CD8-positive, alpha-beta T cell (primary cell): ENCODE measurements at regions of chr20 and their contacts with region 1.

Region 1: GRCh38 chr20:44069203-44070011 is 117.6 kb downstream of the JPH2 start:
- DNase-seq: peak; percentile 49 to 94 (median 76)
- ATAC-seq: peak; percentile 49
- H3K4me3 ChIP-seq: peak overlapping the region; percentile 50 to 54
- H3K4me3 Mint-ChIP-seq: peak overlapping the region; percentile 78
- H3K27ac ChIP-seq: peak overlapping the region; percentile 80 to 99
- H3K27ac Mint-ChIP-seq: peak overlapping the region; percentile 98
- H3K4me1 ChIP-seq: peaks cover 64% of the 10 kb centered on the region
- H3K4me1 Mint-ChIP-seq: peaks cover 78% of the 10 kb centered on the region
- H3K27me3 ChIP-seq: peaks cover 0 to 7% of the 10 kb centered on the region in 2 experiments
- H3K27me3 Mint-ChIP-seq: no peaks in the 10 kb centered on the region
- CTCF ChIP-seq: no peak

Region 2: DNA sequence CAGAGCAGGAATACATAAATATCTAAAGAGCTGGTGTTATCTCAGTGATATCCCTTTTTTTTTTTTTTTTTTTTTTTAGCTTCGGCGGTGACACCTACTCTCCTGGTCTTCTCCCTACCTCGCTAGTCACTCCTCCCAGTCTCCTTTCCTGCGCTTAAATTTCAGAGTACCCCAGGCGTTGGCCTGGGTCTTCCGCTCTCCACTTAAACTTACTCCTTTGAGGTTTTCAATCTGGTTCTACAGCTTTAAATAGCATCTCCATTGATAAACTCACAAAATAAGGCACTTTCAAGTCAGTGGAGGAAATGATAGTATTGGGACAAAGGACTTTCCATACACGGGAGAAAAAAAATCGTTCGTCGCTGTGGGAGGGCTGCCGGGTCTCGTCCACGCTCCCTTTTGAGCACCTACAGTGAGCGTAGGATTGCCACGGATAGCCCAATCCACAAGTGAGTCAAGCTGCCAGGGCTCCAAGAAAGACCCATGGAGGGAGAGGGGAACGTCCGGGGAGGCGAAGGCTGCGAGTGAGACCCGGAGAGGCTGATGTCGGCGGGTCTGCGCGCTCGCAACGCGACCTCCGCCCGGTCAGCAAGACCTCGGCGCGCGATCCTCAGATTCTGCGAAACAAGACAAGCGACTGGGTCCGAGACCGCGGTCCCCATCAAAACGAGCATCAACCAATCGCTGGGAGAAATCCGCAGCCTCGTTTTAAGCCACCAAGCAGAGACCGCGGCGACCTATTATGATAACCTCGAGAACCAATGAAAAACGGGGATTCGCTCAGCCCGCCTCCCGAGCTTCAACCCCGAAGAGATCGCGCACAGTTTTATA is 612.4 kb before region 1 on chr20:
- CTCF ChIA-PET with region 1: no interaction called
- POLR2A ChIA-PET with region 1: no interaction called
- intact Hi-C with region 1: loop called in 1 of 2 experiments (anchors 5 kb)
- DNase-seq: peak; percentile 68 to 94 (median 87)
- ATAC-seq: peak; percentile 79
- H3K4me3 ChIP-seq: peak overlapping the region; percentile 97 to 100
- H3K4me3 Mint-ChIP-seq: peak overlapping the region; percentile 92
- H3K27ac ChIP-seq: peak overlapping the region; percentile 98 to 100
- H3K27ac Mint-ChIP-seq: peak overlapping the region; percentile 98
- H3K4me1 ChIP-seq: peaks cover 16% of the 10 kb centered on the region
- H3K4me1 Mint-ChIP-seq: peaks cover 36% of the 10 kb centered on the region
- H3K27me3 ChIP-seq: no peaks in the 10 kb centered on the region
- H3K27me3 Mint-ChIP-seq: peaks cover 8% of the 10 kb centered on the region
- CTCF ChIP-seq: no peak

Region 3: GRCh38 chr20:43666376-43667328 is 402.8 kb before region 1 on chr20 and contains the start of gene MYBL2:
- CTCF ChIA-PET with region 1: no interaction called
- POLR2A ChIA-PET with region 1: no interaction called
- intact Hi-C with region 1: loop called in 1 of 2 experiments (anchors 10 kb)
- DNase-seq: peak; percentile 49 to 82 (median 66)
- ATAC-seq: peak; percentile 97
- H3K4me3 ChIP-seq: peak within 1 kb of the TSS; percentile 32 to 58
- H3K4me3 Mint-ChIP-seq: peak within 1 kb of the TSS; percentile 54
- H3K27ac ChIP-seq: no peak within 1 kb of the TSS
- H3K27ac Mint-ChIP-seq: no peak within 1 kb of the TSS
- H3K4me1 ChIP-seq: peaks cover 8% of the 10 kb centered on the region
- H3K4me1 Mint-ChIP-seq: peaks cover 2% of the 10 kb centered on the region
- H3K27me3 ChIP-seq: peaks cover 10 to 16% of the 10 kb centered on the region in 2 experiments
- H3K27me3 Mint-ChIP-seq: peaks cover 22% of the 10 kb centered on the region
- CTCF ChIP-seq: no peak
- total RNA-seq, gene MYBL2: 0.49 to 1.1 TPM

Region 4: GRCh38 chr20:43863821-43864544 is 205.4 kb before region 1 on chr20:
- CTCF ChIA-PET with region 1: no interaction called
- POLR2A ChIA-PET with region 1: no interaction called
- intact Hi-C with region 1: no loop called
- DNase-seq: no peak
- ATAC-seq: no peak
- H3K4me3 ChIP-seq: no peak overlapping the region
- H3K4me3 Mint-ChIP-seq: no peak overlapping the region
- H3K27ac ChIP-seq: no peak overlapping the region
- H3K27ac Mint-ChIP-seq: no peak overlapping the region
- H3K4me1 ChIP-seq: no peaks in the 10 kb centered on the region
- H3K4me1 Mint-ChIP-seq: no peaks in the 10 kb centered on the region
- H3K27me3 ChIP-seq: peaks cover 0 to 5% of the 10 kb centered on the region in 2 experiments
- H3K27me3 Mint-ChIP-seq: no peaks in the 10 kb centered on the region
- CTCF ChIP-seq: no peak

Region 5: GRCh38 chr20:43955062-43955749 is 114.2 kb before region 1 on chr20:
- CTCF ChIA-PET with region 1: no interaction called
- POLR2A ChIA-PET with region 1: interaction called, 3 read pairs
- intact Hi-C with region 1: loop called (anchors 1 to 5 kb)
- DNase-seq: peak in 6 of 9 experiments; percentile 17 to 71 (median 62)
- ATAC-seq: peak; percentile 68
- H3K4me3 ChIP-seq: no peak overlapping the region
- H3K4me3 Mint-ChIP-seq: peak overlapping the region; percentile 54
- H3K27ac ChIP-seq: no peak overlapping the region
- H3K27ac Mint-ChIP-seq: peak overlapping the region; percentile 32
- H3K4me1 ChIP-seq: peaks cover 72% of the 10 kb centered on the region
- H3K4me1 Mint-ChIP-seq: peaks cover 86% of the 10 kb centered on the region
- H3K27me3 ChIP-seq: peaks cover 5 to 10% of the 10 kb centered on the region in 2 experiments
- H3K27me3 Mint-ChIP-seq: peaks cover 11% of the 10 kb centered on the region
- CTCF ChIP-seq: no peak

Region 6: DNA sequence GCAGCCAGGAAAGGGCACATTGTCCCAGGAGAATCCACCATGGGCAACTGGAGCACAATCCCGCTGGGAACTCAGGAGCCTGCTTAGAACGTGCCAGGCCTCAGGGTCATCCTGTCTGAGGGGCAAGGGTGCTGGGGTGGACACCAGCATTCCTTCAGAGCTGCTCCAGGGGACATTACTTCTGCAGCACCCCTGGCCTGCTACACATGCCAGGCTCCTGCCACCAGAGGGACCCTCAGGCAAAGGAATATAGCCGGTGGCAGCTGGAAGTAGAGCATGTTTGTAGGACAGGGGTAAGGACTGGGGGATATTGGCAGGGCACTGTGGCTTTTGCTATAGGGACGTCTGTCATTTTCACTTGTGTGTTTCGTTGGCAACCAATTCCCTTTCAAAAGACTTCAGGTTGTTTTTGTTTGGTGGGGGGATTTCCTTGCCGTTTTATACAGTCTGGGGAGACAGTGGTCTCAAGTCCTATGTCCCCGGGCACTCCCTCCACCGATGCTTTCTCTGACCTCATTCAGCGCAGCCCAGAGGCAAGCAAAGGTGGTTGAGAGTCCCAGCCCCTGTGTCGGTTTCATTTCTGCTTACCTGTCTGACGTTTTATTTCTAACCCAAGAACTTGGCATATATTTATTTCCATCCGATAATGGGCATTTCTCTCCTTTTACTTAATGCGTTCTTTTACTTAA is 13.3 kb before region 1 on chr20:
- CTCF ChIA-PET with region 1: interaction called, 32 read pairs
- POLR2A ChIA-PET with region 1: interaction called, 25 read pairs
- intact Hi-C with region 1: loop called (anchors 1 kb)
- DNase-seq: peak; percentile 47 to 82 (median 70)
- ATAC-seq: peak; percentile 98
- H3K4me3 ChIP-seq: no peak overlapping the region
- H3K4me3 Mint-ChIP-seq: no peak overlapping the region
- H3K27ac ChIP-seq: no peak overlapping the region
- H3K27ac Mint-ChIP-seq: peak overlapping the region; percentile 28
- H3K4me1 ChIP-seq: peaks cover 4% of the 10 kb centered on the region
- H3K4me1 Mint-ChIP-seq: peaks cover 23% of the 10 kb centered on the region
- H3K27me3 ChIP-seq: no peaks in the 10 kb centered on the region
- H3K27me3 Mint-ChIP-seq: peaks cover 2% of the 10 kb centered on the region
- CTCF ChIP-seq: peak; percentile 61

Region 7: DNA sequence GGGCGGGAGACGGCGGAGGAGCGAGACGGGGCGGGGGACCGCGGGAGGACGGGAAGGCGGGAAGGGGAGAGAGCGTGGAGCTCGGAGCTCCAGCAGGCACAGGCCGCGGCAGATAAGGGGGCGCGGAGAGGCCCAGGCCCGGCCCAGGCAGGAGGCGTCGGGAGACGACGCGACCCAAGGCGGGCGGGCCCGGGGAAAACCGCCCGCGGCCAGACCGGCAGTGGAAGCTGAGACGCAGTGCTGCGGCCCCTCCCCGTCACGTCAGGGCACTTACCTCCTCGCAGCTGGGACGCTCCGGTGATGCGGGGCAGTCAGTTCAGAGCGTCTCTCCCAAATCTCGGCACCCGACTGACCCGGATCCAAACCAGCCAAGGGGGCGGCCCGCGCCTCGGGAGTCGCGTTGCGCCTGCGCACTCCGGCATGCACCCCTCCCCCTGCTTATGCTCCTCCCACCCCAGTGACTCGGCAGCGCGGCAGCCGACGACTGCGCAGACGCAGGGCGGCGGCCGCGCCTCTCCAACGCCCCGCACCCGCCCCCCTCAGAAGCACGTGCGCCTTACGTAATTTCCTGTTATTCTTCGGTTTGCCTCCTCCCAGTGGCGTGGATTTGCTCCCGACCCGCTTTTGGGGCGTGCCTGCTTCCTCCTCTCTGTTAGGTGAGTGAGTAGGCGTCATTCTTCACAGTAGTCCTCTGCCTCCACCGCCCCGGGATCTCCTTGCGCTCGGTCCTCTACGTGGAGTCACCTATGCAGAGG is 141.2 kb after region 1 on chr20 and contains the start of gene OSER1:
- CTCF ChIA-PET with region 1: no interaction called
- POLR2A ChIA-PET with region 1: no interaction called
- intact Hi-C with region 1: loop called (anchors 5 kb)
- DNase-seq: peak; percentile 97 to 99 (median 98)
- ATAC-seq: peak; percentile 83
- H3K4me3 ChIP-seq: peak within 1 kb of the TSS; percentile 78 to 91
- H3K4me3 Mint-ChIP-seq: peak within 1 kb of the TSS; percentile 96
- H3K27ac ChIP-seq: peak within 1 kb of the TSS; percentile 93 to 96
- H3K27ac Mint-ChIP-seq: peak within 1 kb of the TSS; percentile 99
- H3K4me1 ChIP-seq: peaks cover 43% of the 10 kb centered on the region
- H3K4me1 Mint-ChIP-seq: peaks cover 73% of the 10 kb centered on the region
- H3K27me3 ChIP-seq: no peaks in the 10 kb centered on the region
- H3K27me3 Mint-ChIP-seq: no peaks in the 10 kb centered on the region
- CTCF ChIP-seq: no peak
- total RNA-seq, gene OSER1: 201 to 204 TPM